Cardiac septum (tissue), 1 donor: ENCODE measurements at regions of chrX and their contacts with region 1.

Region 1: GRCh38 chrX:119516157-119516702 is 48.0 kb downstream of the SLC25A5 start:
- DNase-seq: no peak

Region 2: GRCh38 chrX:119118780-119119395 is 397.3 kb before region 1 on chrX:
- intact Hi-C with region 1: no loop called
- DNase-seq: no peak

Region 3: GRCh38 chrX:119309661-119310267 is 206.5 kb before region 1 on chrX:
- intact Hi-C with region 1: no loop called
- DNase-seq: no peak

Region 4: DNA sequence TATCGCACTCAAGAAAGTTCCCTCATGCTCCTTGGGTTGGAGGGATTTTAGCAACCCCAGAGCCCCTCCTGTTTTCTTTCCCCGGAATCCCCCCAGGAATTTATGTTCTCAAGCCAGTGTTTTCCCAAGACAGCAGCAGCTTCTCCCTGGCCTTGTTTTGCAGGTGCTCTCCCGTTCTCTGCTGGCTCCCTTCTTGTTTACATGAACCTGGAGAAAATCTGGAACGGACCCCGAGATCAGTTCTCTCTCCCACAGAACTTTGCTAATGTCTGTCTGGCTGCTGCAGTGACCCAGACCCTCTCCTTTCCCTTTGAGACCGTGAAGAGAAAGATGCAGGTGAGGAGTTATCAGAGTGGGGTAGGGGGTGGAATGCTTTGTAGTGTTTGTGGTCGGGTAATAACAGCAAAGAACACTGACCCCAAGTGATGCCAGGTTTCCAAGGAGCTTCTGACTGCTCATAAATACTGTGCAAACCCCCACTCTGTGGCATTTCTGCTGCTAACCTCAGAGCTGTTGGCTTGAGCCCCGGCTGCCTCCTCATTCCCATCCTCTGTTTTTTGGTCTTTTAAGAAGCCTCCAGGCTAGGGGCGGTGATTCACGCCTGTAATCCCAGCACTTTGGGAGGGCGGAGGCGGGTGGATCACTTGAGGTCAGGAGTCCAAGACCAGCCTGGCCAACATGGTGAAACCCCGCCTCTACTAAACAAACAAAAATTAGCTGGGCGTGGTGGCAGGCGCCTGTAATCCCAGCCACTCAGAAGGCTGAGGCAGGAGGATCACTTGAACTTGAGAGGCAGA is 106.0 kb before region 1 on chrX:
- intact Hi-C with region 1: loop called (anchors 10 kb)
- DNase-seq: no peak

Region 5: GRCh38 chrX:119729408-119730201 is 213.4 kb after region 1 on chrX:
- intact Hi-C with region 1: loop called (anchors 2 kb)
- DNase-seq: no peak